ENCODE measurements at regions of chr10 and their contacts with region 1.

Region 1: DNA sequence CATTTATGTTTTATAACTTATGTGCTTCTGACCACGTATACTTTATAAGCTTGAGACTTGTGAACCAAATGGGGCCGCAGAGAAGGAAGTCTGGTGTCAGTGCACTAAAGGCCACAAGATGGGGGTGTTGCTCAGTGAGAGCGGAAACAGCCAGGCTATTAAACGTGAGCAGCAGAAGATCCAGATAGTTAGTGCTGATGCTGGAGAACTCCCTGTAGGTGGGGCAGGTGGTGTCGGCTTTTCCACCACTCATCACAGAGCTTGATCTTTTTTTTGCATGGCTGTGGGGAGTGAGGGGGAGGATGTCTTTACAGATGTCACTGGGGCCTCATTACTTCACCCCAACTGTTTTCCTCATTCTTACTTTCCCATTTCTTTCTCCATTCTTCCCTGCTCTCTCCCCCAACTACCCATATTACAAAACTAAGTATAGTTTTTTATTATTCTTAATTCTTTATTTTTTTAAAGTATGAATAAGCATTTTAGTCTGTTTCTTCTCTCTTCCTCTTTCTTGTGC is 34.7 kb downstream of the ACADSB start:
- DNase-seq: peak; percentile 67
- H3K4me3 ChIP-seq: 0 out of 4 replicates have a peak overlapping the region, but pooled peaks of 1 of the 2 experiments have one; percentile 27
- H3K27ac ChIP-seq: no peak overlapping the region
- H3K4me1 ChIP-seq: no peaks in the 10 kb centered on the region
- H3K27me3 ChIP-seq: no peaks in the 10 kb centered on the region
- CTCF ChIP-seq: peak; percentile 75
- EP300 ChIP-seq: no peak
- RAD21 ChIP-seq: peak; percentile 85

Region 2: DNA sequence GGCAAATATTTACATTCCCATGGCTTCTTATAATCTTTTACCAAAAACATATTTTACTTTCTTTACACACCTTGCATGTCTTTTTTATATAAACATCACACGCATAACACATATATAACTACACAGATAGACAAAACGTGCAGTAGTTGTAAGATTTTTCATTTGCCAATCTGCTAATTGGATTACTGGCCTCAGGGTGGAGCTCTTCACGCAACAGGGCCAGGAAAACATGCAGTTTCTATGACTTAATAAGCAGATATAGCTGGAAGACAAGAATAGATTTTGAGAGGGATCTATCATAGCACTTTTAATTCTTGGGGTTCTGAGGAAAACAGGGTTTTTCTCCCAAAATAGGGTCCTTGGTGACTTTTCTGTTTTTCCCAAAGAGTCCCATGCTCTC is 21.9 kb before region 1 on chr10:
- CTCF ChIA-PET with region 1: interaction called, 11 read pairs
- POLR2A ChIA-PET with region 1: no interaction called
- DNase-seq: no peak
- H3K4me3 ChIP-seq: no peak overlapping the region
- H3K27ac ChIP-seq: no peak overlapping the region
- H3K4me1 ChIP-seq: no peaks in the 10 kb centered on the region
- H3K27me3 ChIP-seq: no peaks in the 10 kb centered on the region
- CTCF ChIP-seq: peak; percentile 35
- EP300 ChIP-seq: no peak
- RAD21 ChIP-seq: no peak

Region 3: DNA sequence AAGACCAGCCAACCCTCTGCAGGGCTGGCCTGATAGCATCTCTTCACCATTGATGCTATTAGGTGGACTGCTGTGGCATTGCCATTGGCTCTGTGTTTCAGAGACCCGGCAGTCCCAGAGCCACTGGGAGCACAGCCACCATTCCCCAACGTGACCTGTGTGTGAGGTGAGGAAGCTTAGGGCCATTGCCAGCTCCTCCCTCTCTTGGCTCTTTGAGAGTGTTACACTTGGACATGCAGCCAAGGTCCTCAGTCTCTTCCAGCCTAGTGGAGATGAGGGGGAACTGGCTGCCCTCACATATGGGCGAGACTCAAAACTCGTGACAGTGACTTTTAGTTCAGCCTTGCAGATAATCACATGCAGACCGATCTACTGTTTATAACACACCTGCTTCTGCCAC is 53.0 kb after region 1 on chr10:
- CTCF ChIA-PET with region 1: interaction called, 16 read pairs
- POLR2A ChIA-PET with region 1: no interaction called
- DNase-seq: no peak
- H3K4me3 ChIP-seq: no peak overlapping the region
- H3K27ac ChIP-seq: no peak overlapping the region
- H3K4me1 ChIP-seq: no peaks in the 10 kb centered on the region
- H3K27me3 ChIP-seq: no peaks in the 10 kb centered on the region
- CTCF ChIP-seq: no peak
- EP300 ChIP-seq: no peak
- RAD21 ChIP-seq: no peak

Region 4: GRCh38 chr10:123139521-123140163 is 96.2 kb after region 1 on chr10:
- CTCF ChIA-PET with region 1: interaction called, 20 read pairs
- POLR2A ChIA-PET with region 1: no interaction called
- DNase-seq: no peak
- H3K4me3 ChIP-seq: no peak overlapping the region
- H3K27ac ChIP-seq: no peak overlapping the region
- H3K4me1 ChIP-seq: peaks cover 0 to 4% of the 10 kb centered on the region in 2 experiments; a peak in 1 of 4 replicates
- H3K27me3 ChIP-seq: peaks cover 96% of the 10 kb centered on the region
- CTCF ChIP-seq: no peak
- EP300 ChIP-seq: no peak
- RAD21 ChIP-seq: no peak

Region 5: DNA sequence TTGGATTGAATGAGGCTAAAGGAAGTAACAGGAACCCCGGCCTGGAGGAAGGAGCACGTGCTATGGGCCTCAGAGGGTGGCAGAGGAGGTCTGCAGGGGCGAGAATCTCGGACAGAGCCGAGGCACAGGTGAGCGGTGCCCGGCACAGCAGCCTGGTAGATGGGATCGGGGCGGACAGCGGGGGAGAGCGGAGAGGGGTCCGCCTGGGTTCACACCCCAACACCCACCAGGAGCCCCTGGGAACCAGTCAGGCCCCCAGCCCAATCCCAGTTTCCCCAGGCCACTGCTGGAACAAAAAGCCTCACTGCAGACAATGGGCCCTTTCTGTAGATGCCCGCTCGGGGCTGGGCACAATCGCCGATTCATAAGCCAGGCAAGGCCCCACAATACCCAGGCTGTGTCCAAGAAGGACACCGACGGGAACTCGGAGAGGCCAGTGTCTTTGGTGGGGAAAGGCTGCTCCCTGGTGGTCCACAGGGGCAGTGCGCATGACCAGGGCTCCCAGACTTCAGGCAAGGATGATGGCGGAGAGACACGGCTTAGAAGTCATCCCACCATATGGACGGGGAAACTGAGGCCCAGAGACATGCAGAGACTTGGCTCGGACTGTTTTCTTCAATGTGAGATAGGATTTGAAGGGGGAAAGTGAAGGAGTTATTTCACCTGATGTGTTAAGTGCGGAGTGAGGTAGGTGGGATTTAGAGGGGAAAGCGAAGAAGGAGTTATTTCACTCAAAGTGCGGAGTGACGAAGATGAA is 515.8 kb after region 1 on chr10:
- CTCF ChIA-PET with region 1: interaction called, 20 read pairs
- POLR2A ChIA-PET with region 1: no interaction called
- DNase-seq: peak; percentile 88
- H3K4me3 ChIP-seq: no peak overlapping the region
- H3K27ac ChIP-seq: no peak overlapping the region
- H3K4me1 ChIP-seq: no peaks in the 10 kb centered on the region
- H3K27me3 ChIP-seq: no peaks in the 10 kb centered on the region
- CTCF ChIP-seq: peak; percentile 88
- EP300 ChIP-seq: no peak
- RAD21 ChIP-seq: peak; percentile 94